ENCODE measurements at regions of chr1 and their contacts with region 1.

Region 1: DNA sequence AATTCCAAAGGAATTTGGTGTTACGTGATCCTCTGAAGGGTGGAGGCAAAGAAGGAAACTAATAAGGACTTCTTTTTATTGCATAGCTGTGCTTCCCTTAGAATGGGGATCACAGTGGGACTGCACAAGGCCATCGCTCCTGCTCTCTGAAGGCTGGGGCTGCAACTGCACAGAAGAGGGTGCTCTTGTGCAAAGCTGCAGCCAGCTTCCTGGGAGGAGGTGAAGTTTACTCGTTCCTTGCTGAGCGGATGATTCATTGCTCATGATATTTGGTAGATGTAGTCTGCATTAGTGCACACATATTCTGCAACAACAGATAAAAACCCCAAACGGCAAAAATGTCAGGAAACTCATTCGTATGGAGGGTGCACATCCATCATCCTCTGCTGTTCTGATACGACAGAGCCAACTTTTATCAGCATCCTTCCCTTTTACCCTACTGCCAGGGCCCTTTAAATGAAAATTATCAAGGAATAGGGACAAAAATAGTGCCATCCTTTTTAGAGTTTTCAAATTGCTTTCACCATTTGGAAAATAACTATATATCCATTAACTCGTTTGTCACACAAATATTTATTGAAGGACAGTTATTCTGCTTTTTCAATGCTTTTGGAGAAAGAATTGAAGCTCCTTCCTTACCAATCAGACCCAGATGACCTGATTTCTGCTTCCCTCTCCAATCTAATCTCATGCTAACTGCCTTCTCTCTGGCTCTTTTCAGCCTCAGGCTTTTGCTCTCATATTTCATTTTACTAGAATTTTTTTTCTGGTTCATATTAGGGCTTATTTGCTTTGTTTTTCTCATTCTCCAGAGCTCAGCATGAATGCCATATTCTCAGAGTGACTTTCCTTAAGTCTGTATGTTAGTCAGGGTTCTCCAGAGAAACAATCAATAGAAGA is 263.6 kb downstream of the DUSP10 start:
- DNase-seq: peak; percentile 81
- H3K4me3 Mint-ChIP-seq: no peak overlapping the region
- H3K27ac Mint-ChIP-seq: no peak overlapping the region
- H3K4me1 Mint-ChIP-seq: peaks cover 14% of the 10 kb centered on the region
- H3K27me3 Mint-ChIP-seq: no peaks in the 10 kb centered on the region
- CTCF ChIP-seq: peak; percentile 71

Region 2: DNA sequence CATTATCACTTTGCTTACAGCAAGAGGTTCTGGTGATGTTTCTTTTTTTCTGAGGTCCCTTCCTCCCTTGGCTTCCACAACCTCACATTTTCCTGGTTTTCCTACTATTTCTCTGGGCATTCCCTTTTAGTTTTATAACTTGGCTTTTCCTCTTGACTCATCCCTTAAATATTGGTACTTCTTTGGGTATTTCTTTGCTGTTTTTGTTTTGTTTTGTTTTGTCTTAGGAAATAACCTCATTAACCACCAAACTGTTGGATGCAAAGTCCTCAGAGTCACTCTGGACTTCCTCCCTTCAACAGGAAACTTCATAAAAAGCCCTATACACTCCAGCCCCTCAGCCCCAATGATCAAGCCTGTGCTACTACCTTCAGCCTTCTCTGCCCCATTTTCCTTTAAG is 52.5 kb after region 1 on chr1:
- CTCF ChIA-PET with region 1: no interaction called
- intact Hi-C with region 1: no loop called
- DNase-seq: no peak
- H3K4me3 Mint-ChIP-seq: no peak overlapping the region
- H3K27ac Mint-ChIP-seq: no peak overlapping the region
- H3K4me1 Mint-ChIP-seq: no peaks in the 10 kb centered on the region
- H3K27me3 Mint-ChIP-seq: no peaks in the 10 kb centered on the region
- CTCF ChIP-seq: no peak

Region 3: DNA sequence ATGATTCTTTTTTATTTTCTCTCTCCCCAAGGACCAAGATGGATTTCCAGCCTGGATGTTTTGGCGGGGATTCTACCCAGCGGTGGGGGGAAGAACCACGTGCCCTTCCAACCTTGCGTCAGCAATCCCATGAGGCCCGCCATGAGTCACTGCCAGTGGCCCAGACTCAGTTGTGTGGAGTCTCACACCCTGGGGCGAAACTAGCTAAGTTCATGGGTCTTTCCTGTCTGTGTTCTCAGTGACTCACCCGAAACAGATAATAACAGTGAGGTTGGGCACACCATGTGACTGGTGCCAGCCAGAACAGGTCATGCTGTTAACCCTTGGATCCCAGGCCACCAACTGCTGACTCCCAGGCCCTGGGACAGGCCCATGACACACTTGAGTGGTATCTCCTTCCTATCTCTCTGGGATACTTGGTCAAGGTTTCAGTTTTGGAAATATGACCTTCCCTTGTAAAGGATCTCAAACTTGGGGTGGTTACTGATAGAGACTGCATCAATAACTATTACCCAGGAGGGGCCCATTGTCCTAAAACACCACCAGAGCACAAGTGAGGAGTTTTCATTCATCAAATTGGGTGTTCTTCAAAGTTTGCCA is 361.6 kb after region 1 on chr1:
- CTCF ChIA-PET with region 1: interaction called, 4 read pairs
- intact Hi-C with region 1: loop called (anchors 10 kb)
- DNase-seq: peak; percentile 91
- H3K4me3 Mint-ChIP-seq: no peak overlapping the region
- H3K27ac Mint-ChIP-seq: peak overlapping the region; percentile 48
- H3K4me1 Mint-ChIP-seq: peaks cover 88% of the 10 kb centered on the region
- H3K27me3 Mint-ChIP-seq: no peaks in the 10 kb centered on the region
- CTCF ChIP-seq: no peak

Region 4: GRCh38 chr1:222009105-222009730 is 530.9 kb after region 1 on chr1:
- CTCF ChIA-PET with region 1: no interaction called
- intact Hi-C with region 1: loop called (anchors 2 kb)
- DNase-seq: peak; percentile 41
- H3K4me3 Mint-ChIP-seq: no peak overlapping the region
- H3K27ac Mint-ChIP-seq: no peak overlapping the region
- H3K4me1 Mint-ChIP-seq: peaks cover 10% of the 10 kb centered on the region
- H3K27me3 Mint-ChIP-seq: no peaks in the 10 kb centered on the region
- CTCF ChIP-seq: peak; percentile 44

Measured in Calu3 (cell line).